OCI-LY7 (cell line): ENCODE measurements at regions of chr20 and their contacts with region 1.

Region 1: DNA sequence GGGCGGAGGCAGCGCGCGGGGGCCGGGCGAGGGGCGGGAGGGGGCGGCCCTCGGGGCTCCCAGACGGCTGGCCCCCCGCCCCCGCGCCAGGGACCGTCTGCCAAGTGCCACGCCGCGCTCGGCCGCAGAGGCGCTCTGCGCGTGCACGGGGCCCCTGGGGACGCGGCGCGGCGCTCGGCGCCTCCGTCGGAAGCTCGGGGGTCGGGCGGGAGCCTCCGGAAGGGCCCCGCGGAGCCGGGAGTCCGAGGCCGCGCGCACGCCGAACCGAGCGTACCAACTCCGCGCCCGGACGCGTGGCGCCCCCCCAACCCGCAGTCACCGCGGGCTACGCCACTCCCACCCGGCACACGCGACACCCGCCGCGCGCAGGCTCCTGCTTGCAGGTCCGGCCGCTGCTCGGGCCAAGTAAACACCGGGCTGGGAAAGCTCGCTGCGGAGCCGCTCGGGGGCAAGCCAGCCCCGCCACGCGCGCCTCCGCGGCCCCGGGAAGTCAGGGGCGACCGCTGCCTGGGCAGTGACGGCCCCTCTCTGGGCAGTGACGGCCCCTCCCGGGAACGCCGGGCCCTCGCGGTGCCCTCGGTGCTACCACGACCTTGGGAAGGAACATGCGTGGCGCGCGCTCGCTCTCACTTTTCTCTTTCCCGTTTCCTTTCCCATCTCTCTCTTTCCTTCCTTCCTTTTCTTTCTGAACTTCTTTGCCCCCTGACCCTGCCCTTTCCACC is 384 bp upstream of the PREX1 start:
- DNase-seq: peak; percentile 95
- H3K4me3 ChIP-seq: peak overlapping the region; percentile 74
- H3K27ac ChIP-seq: peak overlapping the region; percentile 30
- H3K4me1 ChIP-seq: peaks cover 58% of the 10 kb centered on the region
- CTCF ChIP-seq: peak; percentile 15; the same call in 1 of the 2 replicates

Region 2: GRCh38 chr20:48359697-48360336 is 468.4 kb before region 1 on chr20:
- CTCF ChIA-PET with region 1: no interaction called
- POLR2A ChIA-PET with region 1: no interaction called
- intact Hi-C with region 1: no loop called
- DNase-seq: peak; percentile 74
- H3K4me3 ChIP-seq: peak overlapping the region; percentile 61
- H3K27ac ChIP-seq: peak overlapping the region; percentile 69
- H3K4me1 ChIP-seq: peaks cover 32% of the 10 kb centered on the region
- CTCF ChIP-seq: no peak

Region 3: GRCh38 chr20:48657475-48658470 is 170.4 kb before region 1 on chr20:
- CTCF ChIA-PET with region 1: interaction called, 3 read pairs
- POLR2A ChIA-PET with region 1: no interaction called
- intact Hi-C with region 1: loop called (anchors 1 kb)
- DNase-seq: peak; percentile 80
- H3K4me3 ChIP-seq: no peak overlapping the region
- H3K27ac ChIP-seq: no peak overlapping the region
- H3K4me1 ChIP-seq: no peaks in the 10 kb centered on the region
- CTCF ChIP-seq: peak; percentile 95

Region 4: GRCh38 chr20:48738399-48739304 is 89.5 kb before region 1 on chr20:
- CTCF ChIA-PET with region 1: no interaction called
- POLR2A ChIA-PET with region 1: interaction called, 7 read pairs
- intact Hi-C with region 1: loop called (anchors 5 kb)
- DNase-seq: peak; percentile 39
- H3K4me3 ChIP-seq: no peak overlapping the region
- H3K27ac ChIP-seq: peak overlapping the region; percentile 12
- H3K4me1 ChIP-seq: peaks cover 55% of the 10 kb centered on the region
- CTCF ChIP-seq: no peak

Region 5: GRCh38 chr20:48750947-48751635 is 77.1 kb before region 1 on chr20:
- CTCF ChIA-PET with region 1: no interaction called
- POLR2A ChIA-PET with region 1: no interaction called
- intact Hi-C with region 1: loop called (anchors 5 kb)
- DNase-seq: peak; percentile 65
- H3K4me3 ChIP-seq: peak overlapping the region; percentile 33
- H3K27ac ChIP-seq: peak overlapping the region; percentile 75
- H3K4me1 ChIP-seq: peaks cover 63% of the 10 kb centered on the region
- CTCF ChIP-seq: no peak

Region 6: GRCh38 chr20:48761046-48761748 is 67.0 kb before region 1 on chr20:
- CTCF ChIA-PET with region 1: no interaction called
- POLR2A ChIA-PET with region 1: no interaction called
- intact Hi-C with region 1: no loop called
- DNase-seq: peak; percentile 56
- H3K4me3 ChIP-seq: no peak overlapping the region
- H3K27ac ChIP-seq: peak overlapping the region; percentile 80
- H3K4me1 ChIP-seq: peaks cover 45% of the 10 kb centered on the region
- CTCF ChIP-seq: no peak

Region 7: DNA sequence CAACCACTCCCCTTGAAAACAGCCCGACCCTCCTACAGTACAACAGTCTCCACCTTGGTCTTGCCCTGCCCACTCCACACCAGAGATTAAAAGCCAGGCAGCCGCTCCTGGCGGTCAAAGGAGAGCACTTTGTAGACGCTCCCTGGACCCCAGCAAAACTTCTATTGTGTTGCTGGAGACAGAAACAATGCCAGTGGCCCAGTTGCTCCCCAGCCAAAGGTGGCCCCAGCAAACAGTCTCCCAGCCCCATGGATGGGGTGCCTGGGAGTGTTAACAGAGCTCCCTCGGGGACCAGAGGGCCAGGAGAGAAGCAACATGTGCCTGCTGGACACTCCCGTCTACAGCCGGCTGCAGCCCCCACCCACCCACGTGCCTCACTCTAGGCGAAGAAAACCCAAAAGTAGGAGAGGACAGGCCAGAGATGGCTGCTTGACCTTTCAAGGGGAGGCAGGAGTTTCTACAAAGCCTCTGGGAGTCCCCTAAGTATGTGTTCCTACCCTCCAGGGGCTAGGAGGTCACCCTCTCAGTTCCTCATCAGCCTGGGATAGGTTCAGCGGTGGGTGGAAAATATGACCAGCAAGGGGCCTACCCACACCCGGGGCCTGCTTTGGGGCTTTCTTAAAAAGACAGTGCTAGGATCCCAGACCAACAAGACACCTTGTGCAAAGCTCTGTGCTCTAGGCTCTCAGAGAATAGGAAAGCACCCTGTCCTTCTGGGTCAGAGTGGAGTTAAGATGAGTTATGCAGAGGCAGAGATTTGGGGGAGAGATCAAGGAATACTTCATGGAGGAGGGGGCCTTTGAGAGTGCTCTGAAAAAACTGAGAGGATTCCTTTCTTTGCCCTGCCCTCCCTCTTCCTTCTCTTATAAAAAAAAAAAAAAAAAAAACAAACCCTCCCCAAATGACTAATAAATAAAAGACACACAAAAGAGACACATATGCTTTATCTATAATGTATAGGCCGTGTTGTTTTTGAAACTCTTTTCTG is 18.6 kb after region 1 on chr20:
- CTCF ChIA-PET with region 1: no interaction called
- POLR2A ChIA-PET with region 1: interaction called, 4 read pairs
- intact Hi-C with region 1: loop called (anchors 1 kb)
- DNase-seq: peak; percentile 84
- H3K4me3 ChIP-seq: peak overlapping the region; percentile 44
- H3K27ac ChIP-seq: peak overlapping the region; percentile 37
- H3K4me1 ChIP-seq: peaks cover 39% of the 10 kb centered on the region
- CTCF ChIP-seq: no peak

Region 8: DNA sequence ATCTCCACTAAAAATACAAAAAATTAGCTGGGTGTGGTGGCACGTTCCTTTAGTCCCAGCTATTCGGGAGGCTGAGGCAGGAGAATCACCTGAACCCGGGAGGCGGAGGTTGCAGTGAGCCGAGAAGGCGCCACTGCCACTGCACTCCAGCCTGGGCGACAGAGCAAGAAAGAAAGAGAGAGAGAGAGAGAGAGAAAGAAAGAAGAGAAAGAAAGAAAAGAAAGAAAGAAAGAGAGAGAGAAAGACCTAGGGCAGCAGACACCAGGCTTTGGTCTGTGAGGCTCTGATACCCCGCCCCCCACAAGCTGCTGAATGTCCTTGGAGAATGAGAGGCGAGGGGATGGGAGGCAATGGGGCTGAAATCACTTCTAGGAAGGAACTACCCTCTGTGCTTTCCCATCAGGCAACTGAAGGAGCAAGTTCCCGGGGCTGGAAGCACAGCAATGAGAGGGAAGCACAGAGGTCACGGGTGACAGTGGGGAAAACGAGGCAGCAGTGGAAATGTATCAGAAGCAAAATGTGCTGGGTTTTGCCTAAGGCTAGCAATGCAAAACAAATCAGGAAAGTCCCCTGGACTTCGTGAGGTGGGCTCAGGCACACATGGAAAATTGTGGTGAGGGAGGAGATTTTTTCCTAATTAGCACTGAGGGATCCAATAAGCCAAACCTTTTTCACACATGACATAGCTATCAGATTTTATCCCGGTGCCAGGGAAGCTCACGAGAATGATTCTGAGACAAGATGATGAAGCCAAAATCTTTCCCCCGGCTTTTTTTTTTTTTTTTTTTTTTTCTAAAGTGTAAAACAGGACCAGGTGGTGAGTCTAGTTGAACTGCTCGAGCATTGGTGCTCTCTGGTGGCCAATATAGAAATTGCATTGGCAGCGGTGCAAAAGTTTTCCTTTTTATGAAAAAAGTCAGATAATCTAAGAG is 76.4 kb after region 1 on chr20:
- CTCF ChIA-PET with region 1: no interaction called
- POLR2A ChIA-PET with region 1: interaction called, 7 read pairs
- intact Hi-C with region 1: loop called (anchors 2 kb)
- DNase-seq: peak; percentile 79
- H3K4me3 ChIP-seq: peak overlapping the region; percentile 15
- H3K27ac ChIP-seq: no peak overlapping the region
- H3K4me1 ChIP-seq: peaks cover 9% of the 10 kb centered on the region
- CTCF ChIP-seq: peak; percentile 96

Region 9: DNA sequence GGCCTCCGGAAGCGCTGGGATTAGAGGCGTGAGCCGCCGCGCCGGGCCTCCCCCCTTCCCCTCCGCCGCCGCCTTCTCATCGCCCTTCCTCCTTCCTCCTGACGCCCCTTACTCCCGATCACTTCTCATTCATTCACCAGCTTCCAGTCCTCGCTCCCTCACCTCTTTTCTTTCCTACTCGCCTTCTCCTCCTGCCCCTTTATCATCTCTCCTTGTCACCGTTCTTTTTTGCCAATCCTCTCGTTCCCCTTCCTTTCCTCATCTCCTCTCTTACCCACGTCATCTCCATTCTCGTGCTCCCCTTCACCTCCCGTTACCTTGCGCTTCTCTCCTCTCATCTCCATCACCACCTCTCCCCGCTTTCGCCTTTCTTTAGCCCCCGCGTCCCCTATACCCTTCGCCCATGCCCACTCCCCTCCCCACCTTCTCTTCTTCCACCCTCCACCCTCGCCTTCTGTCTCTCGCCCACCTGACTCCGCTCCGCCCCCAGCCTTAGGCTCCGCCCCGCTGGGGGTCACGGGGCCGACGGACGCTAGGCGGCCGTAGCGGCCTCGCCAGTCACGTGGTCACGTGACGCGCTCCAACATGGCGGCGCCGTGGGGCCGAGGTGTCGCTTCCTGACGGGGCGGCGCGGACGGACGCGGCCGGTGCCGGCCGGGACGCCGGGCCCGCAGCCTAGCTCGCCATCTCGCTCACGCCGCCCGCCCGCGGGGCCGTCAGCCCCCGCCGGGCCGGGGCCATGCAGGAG is 93.1 kb after region 1 on chr20 and contains the start of gene ARFGEF2:
- CTCF ChIA-PET with region 1: no interaction called
- POLR2A ChIA-PET with region 1: interaction called, 3 read pairs
- intact Hi-C with region 1: loop called (anchors 5 kb)
- DNase-seq: peak; percentile 97
- H3K4me3 ChIP-seq: peak within 1 kb of the TSS; percentile 91
- H3K27ac ChIP-seq: peak within 1 kb of the TSS; percentile 78
- H3K4me1 ChIP-seq: peaks cover 48% of the 10 kb centered on the region
- CTCF ChIP-seq: no peak; the same call in 1 of the 2 replicates
- total RNA-seq, gene ARFGEF2: 18.4 and 23.4 TPM in 2 replicates

Region 10: DNA sequence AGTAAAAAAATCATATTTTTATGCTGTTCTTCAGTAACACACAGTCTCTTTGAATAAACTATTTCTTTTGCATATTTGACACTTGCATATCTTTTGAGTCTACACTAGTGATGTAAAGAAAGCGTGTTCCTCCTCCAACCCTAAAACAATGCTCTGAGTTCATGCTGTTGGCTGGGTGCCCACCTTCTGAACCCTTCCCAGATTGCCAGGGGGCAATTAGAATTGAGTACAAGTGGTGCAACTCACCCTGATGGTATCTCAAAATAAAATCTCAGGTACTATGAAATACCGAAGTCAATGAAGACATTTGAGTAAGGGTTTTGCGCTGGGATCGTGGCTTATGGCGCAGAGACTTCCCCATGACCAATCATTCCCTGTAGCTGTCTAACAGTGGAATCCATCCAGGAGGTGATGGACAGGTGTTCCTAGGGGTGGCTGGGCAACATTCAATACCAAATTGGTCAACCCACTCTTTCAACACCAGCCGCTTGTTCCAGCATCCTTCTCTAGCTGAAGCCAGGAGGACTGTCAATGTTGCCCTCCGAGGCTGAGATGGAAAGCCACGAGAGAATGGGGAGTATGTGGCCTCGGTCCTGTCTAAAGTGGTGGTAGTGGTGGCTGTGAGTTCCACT is 544.0 kb after region 1 on chr20:
- CTCF ChIA-PET with region 1: no interaction called
- POLR2A ChIA-PET with region 1: no interaction called
- intact Hi-C with region 1: no loop called
- DNase-seq: no peak
- H3K4me3 ChIP-seq: no peak overlapping the region
- H3K27ac ChIP-seq: no peak overlapping the region
- H3K4me1 ChIP-seq: no peaks in the 10 kb centered on the region
- CTCF ChIP-seq: no peak